ENCODE measurements at regions of chr3 and their contacts with region 1.

Region 1: DNA sequence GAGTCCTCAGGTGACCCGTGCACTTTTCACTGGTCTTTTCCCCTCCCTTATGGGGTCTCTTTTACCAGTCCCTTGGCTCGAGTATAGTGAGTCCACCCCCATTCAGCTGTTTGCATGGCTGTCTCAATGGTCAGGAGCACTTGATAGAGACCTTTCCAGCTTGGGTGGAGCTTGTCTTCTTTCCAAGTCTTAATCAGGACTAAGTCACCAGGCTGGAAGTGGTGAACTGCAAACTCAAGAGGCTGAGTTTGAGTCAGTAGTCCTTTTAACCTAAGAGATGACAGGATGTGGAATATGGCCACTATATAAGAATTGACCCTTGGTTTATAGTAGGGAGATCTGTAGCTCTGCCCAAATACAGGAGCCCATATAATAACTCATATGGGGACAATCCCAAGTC is 279.7 kb downstream of the PYDC2 start:
- DNase-seq: no peak
- ATAC-seq: no peak
- H3K4me3 ChIP-seq: no peak overlapping the region
- H3K27ac ChIP-seq: peak overlapping the region; percentile 90
- H3K4me1 ChIP-seq: peaks cover 37% of the 10 kb centered on the region
- H3K27me3 ChIP-seq: no peaks in the 10 kb centered on the region
- CTCF ChIP-seq: no peak
- EP300 ChIP-seq: no peak
- POLR2A ChIP-seq: no peak
- RAD21 ChIP-seq: no peak

Region 2: DNA sequence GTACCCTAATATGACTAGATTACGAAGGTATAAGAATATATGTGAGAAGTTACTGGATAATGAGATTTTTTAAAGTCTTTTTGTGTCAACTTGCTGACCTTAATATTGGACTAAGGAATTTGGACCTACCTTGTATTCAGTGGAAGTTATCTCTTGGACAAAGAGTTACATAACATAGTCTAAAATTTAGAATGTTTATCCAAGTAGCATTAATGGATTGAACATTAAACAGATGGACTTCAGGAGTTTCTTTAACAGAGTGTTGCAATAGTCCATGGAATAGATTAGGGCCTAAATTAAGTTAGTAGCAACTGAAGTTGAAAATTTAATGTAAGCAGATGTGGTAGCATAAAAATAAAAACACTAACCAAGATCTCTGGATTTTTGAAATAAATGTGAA is 13.4 kb before region 1 on chr3:
- CTCF ChIA-PET with region 1: no interaction called
- POLR2A ChIA-PET with region 1: no interaction called
- in situ Hi-C with region 1: no loop called
- intact Hi-C with region 1: loop called (anchors 2 kb)
- DNase-seq: peak; percentile 57
- ATAC-seq: peak; percentile 39; the same call in 1 of the 3 replicates
- H3K4me3 ChIP-seq: no peak overlapping the region
- H3K27ac ChIP-seq: peak overlapping the region; percentile 38
- H3K4me1 ChIP-seq: peaks cover 39% of the 10 kb centered on the region
- H3K27me3 ChIP-seq: no peaks in the 10 kb centered on the region
- CTCF ChIP-seq: no peak
- EP300 ChIP-seq: peak in 1 of 2 experiments; percentile 66; a peak in 2 of 4 replicates
- POLR2A ChIP-seq: no peak
- RAD21 ChIP-seq: no peak

Region 3: GRCh38 chr3:191762323-191762960 is 21.7 kb after region 1 on chr3:
- CTCF ChIA-PET with region 1: no interaction called
- POLR2A ChIA-PET with region 1: no interaction called
- in situ Hi-C with region 1: no loop called
- intact Hi-C with region 1: loop called (anchors 1 kb)
- DNase-seq: peak; percentile 95
- ATAC-seq: peak; percentile 100
- H3K4me3 ChIP-seq: no peak overlapping the region; a peak in 1 of 6 replicates
- H3K27ac ChIP-seq: peak overlapping the region; percentile 86
- H3K4me1 ChIP-seq: peaks cover 17% of the 10 kb centered on the region
- H3K27me3 ChIP-seq: no peaks in the 10 kb centered on the region
- CTCF ChIP-seq: no peak
- EP300 ChIP-seq: peak; percentile 31 to 85; a peak in 2 of 4 replicates
- POLR2A ChIP-seq: no peak
- RAD21 ChIP-seq: no peak